Activated CD4-positive, alpha-beta memory T cell treated with anti-CD3 and anti-CD28 coated beads for 36 hours (primary cell): ENCODE measurements at regions of chr7 and their contacts with region 1.

Region 1: GRCh38 chr7:89002981-89003956 is 207.7 kb upstream of the TEX47 start:
- DNase-seq: no peak
- H3K4me3 Mint-ChIP-seq: peak overlapping the region; percentile 57
- H3K27ac Mint-ChIP-seq: peak overlapping the region; percentile 73
- H3K4me1 Mint-ChIP-seq: peaks cover 20% of the 10 kb centered on the region
- H3K27me3 Mint-ChIP-seq: peaks cover 2% of the 10 kb centered on the region

Region 2: DNA sequence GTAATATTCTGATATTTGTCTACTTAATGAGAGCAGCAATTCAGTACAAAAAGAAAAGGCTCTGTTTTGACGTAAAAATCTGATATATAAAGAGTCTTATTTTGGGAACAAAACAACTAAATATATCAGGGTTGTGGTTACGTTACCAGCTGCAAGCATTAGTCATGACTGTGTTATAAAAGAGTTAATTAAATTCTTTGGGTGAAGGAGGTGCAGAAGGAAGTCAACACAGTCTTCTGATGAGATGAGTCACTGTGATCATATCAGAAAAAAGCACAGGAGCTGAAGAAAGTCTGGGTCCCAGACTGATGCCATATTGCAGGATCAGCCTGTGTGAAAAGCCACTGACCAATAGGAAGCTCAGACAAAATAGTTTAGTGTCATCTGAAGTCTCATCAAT is 26.6 kb after region 1 on chr7:
- CTCF ChIA-PET with region 1: no interaction called
- POLR2A ChIA-PET with region 1: no interaction called
- intact Hi-C with region 1: loop called (anchors 2 kb)
- DNase-seq: no peak
- H3K4me3 Mint-ChIP-seq: no peak overlapping the region
- H3K27ac Mint-ChIP-seq: no peak overlapping the region
- H3K4me1 Mint-ChIP-seq: no peaks in the 10 kb centered on the region
- H3K27me3 Mint-ChIP-seq: no peaks in the 10 kb centered on the region

Region 3: GRCh38 chr7:90178679-90179278 is 1175.5 kb after region 1 on chr7:
- CTCF ChIA-PET with region 1: no interaction called
- POLR2A ChIA-PET with region 1: no interaction called
- intact Hi-C with region 1: loop called (anchors 10 kb)
- DNase-seq: peak; percentile 27
- H3K4me3 Mint-ChIP-seq: no peak overlapping the region
- H3K27ac Mint-ChIP-seq: peak overlapping the region; percentile 68
- H3K4me1 Mint-ChIP-seq: peaks cover 17% of the 10 kb centered on the region
- H3K27me3 Mint-ChIP-seq: peaks cover 2% of the 10 kb centered on the region

Region 4: DNA sequence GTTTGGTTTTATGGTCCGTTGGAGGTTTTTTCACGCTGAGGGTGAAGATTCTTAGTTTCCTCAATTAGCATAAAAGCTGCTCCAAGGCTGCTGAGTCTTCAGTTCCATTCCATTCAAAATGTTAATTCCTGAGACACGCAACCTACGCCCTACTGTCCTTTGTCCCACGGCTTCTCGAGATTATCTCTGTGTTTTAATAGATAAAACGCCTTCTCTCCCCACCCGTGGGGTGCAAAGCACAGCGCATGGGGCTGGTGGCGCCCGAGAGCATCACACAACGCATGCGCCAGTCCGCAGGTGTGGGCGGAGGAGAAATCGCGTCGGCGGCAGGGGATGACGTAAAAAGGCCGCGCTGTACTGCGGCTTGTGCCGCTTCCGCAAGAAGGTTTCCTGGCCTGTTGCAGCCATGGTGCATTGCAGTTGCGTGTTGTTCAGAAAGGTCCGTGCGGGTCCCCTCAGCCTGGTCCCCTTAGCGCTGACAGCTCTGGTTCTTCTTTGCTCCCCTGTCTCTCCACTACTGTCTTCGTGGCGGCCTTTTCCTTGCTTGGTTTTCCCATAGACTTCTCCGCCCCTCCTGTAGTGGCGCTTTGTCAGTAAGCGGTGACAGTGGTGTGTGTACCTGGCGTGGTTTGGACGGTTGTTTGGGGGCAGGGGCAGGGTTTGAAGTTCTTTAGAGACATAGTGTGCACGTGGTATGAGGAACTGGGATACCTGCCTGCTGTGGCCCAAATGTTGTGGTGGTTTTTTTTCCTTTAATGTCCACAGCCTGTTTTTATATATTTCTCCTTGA is 1343.3 kb after region 1 on chr7 and contains the start of gene GTPBP10:
- CTCF ChIA-PET with region 1: no interaction called
- POLR2A ChIA-PET with region 1: no interaction called
- intact Hi-C with region 1: loop called (anchors 10 kb)
- DNase-seq: peak; percentile 97
- H3K4me3 Mint-ChIP-seq: peak within 1 kb of the TSS; percentile 94
- H3K27ac Mint-ChIP-seq: peak within 1 kb of the TSS; percentile 93
- H3K4me1 Mint-ChIP-seq: peaks cover 40% of the 10 kb centered on the region
- H3K27me3 Mint-ChIP-seq: no peaks in the 10 kb centered on the region
- total RNA-seq, gene GTPBP10: 32.9 to 33.2 TPM